Breast epithelium (tissue), 4 donors: ENCODE measurements at regions of chr15 and their contacts with region 1.

Region 1: DNA sequence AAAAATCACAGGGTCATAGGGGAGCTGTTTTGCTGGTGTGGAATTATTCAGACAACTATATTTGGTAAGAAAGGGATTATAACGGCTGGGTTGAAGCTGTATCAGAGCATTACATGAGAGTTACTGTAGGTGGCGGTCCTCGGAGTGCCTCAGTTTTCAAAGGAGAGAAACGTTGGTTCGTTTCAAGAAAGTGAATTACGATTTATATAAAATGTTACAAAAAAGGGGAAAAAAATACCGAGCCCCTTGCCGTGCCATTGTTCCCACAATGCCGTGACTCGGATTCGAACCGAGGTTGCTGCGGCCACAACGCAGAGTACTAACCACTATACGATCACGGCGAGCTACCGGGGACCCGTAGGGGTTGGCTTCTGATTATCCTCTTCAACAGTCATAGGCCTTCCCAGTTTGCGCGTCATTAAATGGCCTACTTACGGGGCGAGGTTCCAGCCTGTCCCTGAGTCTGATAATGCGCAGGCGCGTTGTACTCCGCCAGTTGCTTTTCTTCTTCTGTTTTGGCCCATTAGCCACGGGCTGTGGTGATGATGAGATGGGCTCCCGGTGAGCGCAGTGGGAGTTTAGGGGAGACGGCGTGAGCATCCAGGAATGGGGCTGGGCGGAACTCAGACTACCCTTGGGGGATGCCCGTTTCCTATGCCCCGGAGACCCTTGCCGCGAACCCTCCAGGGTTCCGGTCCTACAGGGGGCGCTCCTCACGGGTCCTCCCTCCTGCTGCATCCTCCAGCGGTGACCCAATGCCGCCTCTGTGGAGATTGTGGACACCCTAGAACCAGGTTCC is 10.8 kb upstream of the SHF start:
- DNase-seq: peak; percentile 95 to 98
- H3K4me3 ChIP-seq: peak overlapping the region; percentile 66 to 79 (median 75)
- H3K27ac ChIP-seq: peak overlapping the region; percentile 96 to 98
- H3K4me1 ChIP-seq: no peaks in the 10 kb centered on the region
- H3K27me3 ChIP-seq: no peaks in the 10 kb centered on the region
- CTCF ChIP-seq: peak; percentile 61 to 73 (median 68)
- POLR2A ChIP-seq: peak; percentile 98

Region 2: GRCh38 chr15:45402162-45402954 is 203.8 kb after region 1 on chr15:
- intact Hi-C with region 1: loop called (anchors 10 kb)
- DNase-seq: peak; percentile 90 to 94
- H3K4me3 ChIP-seq: peak overlapping the region; percentile 84 to 97 (median 93)
- H3K27ac ChIP-seq: peak overlapping the region; percentile 89 to 96
- H3K4me1 ChIP-seq: peaks cover 0 to 7% of the 10 kb centered on the region in 2 donors
- H3K27me3 ChIP-seq: no peaks in the 10 kb centered on the region
- CTCF ChIP-seq: no peak
- POLR2A ChIP-seq: peak; percentile 45